A549 (cell line): ENCODE measurements at regions of chr22 and their contacts with region 1.

Region 1: DNA sequence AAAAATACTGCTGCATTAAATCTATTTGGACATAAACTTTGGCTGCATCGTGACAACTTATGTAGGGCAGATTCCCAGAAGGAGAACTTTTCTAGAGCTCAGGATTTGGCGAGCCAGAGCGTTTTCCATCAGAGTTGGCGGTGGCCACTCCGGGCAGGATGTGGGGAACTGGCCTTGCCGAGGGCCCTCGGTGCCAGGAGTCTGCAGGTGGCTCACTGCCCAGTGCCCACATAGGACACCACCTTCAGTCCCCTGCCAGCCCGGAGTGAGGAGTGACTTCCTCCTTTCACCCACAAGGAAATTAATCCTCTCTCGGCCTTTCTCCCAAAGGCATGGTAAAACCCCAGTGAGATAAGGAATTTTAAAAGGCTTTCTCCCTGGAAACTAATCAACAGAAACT is 1.6 kb upstream of the LGALS2 start:
- DNase-seq: no peak
- ATAC-seq: no peak
- H3K4me3 ChIP-seq: no peak overlapping the region
- H3K27ac ChIP-seq: no peak overlapping the region
- H3K4me1 ChIP-seq: peaks cover 7% of the 10 kb centered on the region; the same call in 2 of the 3 replicates
- CTCF ChIP-seq: no peak
- EP300 ChIP-seq: no peak
- POLR2A ChIP-seq: no peak
- RAD21 ChIP-seq: no peak

Region 2: GRCh38 chr22:37544955-37545699 is 36.4 kb before region 1 on chr22:
- CTCF ChIA-PET with region 1: interaction called, 14 read pairs
- POLR2A ChIA-PET with region 1: interaction called, 5 read pairs
- DNase-seq: peak; percentile 62 to 73
- ATAC-seq: peak; percentile 73 to 82
- H3K4me3 ChIP-seq: peak overlapping the region; percentile 36
- H3K27ac ChIP-seq: peak overlapping the region; percentile 80 to 96
- H3K4me1 ChIP-seq: peaks cover 50% of the 10 kb centered on the region
- CTCF ChIP-seq: peak; percentile 77
- EP300 ChIP-seq: no peak
- POLR2A ChIP-seq: no peak
- RAD21 ChIP-seq: peak; percentile 87 to 89